Motor neuron (in vitro differentiated cells): ENCODE measurements at regions of chr3 and their contacts with region 1.

Region 1: GRCh38 chr3:151276687-151277042 is 1.7 kb downstream of the P2RY14 start:
- ATAC-seq: no peak
- H3K4me3 ChIP-seq: no peak overlapping the region
- H3K27ac ChIP-seq: no peak overlapping the region
- H3K4me1 ChIP-seq: no peaks in the 10 kb centered on the region

Region 2: GRCh38 chr3:151168269-151169094 is 108.2 kb before region 1 on chr3:
- in situ Hi-C with region 1: loop called in 6 of 9 experiments (anchors 5 to 25 kb)
- ATAC-seq: peak in 6 of 8 experiments; percentile 60 to 92 (median 86)
- H3K4me3 ChIP-seq: no peak overlapping the region
- H3K27ac ChIP-seq: no peak overlapping the region
- H3K4me1 ChIP-seq: peaks cover 5 to 12% of the 10 kb centered on the region in 2 donors